ENCODE measurements at regions of chr12 and their contacts with region 1.

Region 1: DNA sequence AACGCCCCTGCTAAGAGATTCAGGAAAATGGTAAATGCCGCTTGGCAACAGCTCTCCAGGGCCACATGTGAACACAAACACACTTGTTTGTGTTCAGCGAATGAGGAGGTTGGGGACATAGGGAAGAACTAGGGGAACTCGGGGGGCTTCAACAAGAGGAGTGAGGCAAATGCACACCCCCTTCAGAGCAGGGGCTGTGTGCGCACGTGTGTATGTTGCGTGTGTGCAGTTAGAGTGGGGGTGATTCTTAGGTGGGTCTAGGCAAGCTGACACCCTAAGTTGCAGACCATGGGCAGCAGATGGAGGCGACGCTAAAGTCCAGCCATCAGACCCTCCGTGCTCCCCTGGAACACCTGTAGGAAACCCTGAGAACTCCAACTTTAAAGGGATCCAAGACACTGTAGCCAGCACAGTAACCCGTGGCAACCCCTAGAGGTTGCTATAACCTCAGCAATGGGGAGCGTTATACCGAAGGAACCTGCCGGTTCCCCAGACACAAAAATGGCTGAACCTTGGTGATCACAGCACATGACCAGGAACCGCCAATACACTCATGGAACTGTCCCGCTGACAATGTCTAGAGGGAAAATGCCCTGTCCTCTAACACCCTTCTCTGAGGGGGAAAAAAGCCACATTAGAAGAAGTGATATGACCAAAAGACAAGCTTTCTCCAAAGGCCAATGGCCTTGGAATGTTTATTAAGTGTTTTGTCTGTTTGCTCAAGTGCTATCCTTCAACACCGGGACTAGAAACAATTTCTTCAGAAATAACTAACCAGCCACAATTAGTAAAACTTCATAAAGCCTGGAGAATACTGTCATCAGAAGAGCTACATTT is 86.5 kb upstream of the CEP83 start:
- DNase-seq: peak; percentile 67
- H3K4me3 Mint-ChIP-seq: no peak overlapping the region
- H3K27ac Mint-ChIP-seq: no peak overlapping the region
- H3K4me1 Mint-ChIP-seq: peaks cover 5% of the 10 kb centered on the region
- H3K27me3 Mint-ChIP-seq: no peaks in the 10 kb centered on the region
- CTCF ChIP-seq: peak; percentile 84

Region 2: GRCh38 chr12:94725375-94726168 is 179.4 kb after region 1 on chr12:
- CTCF ChIA-PET with region 1: no interaction called
- POLR2A ChIA-PET with region 1: no interaction called
- intact Hi-C with region 1: loop called (anchors 1 kb)
- DNase-seq: peak; percentile 70
- H3K4me3 Mint-ChIP-seq: no peak overlapping the region
- H3K27ac Mint-ChIP-seq: no peak overlapping the region
- H3K4me1 Mint-ChIP-seq: no peaks in the 10 kb centered on the region
- H3K27me3 Mint-ChIP-seq: no peaks in the 10 kb centered on the region
- CTCF ChIP-seq: peak; percentile 49

Region 3: DNA sequence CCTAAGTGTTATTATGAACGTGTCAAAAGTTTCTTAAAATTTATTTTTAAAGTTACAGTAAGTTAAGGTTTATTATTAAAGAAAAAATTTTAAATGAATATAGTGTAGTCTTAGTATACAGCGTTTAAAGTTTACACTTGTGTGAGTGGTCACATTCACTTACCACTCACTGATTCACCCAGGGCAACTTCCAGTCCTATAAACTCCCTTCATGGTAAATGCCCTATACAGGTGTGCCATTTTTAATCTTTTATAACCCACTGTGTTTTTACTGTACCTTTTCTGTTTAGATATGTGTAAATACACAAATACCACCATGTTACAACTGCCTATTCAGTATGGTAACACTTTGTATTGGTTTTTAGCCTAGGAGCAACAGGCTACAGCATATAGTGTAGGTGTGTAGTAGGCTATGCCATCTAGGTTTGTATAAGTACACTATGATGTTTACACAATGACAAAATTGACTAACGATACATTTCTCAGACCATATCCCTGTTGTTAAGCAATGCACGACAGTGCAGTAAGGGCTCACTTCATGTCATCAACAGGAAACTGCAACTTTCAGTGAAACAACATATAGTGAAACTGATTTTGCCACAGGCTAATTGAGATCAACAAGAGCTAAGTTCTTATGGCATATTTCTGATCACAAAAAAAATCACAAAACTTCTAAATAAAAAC is 216.2 kb after region 1 on chr12:
- CTCF ChIA-PET with region 1: interaction called, 6 read pairs
- POLR2A ChIA-PET with region 1: interaction called, 3 read pairs
- intact Hi-C with region 1: loop called (anchors 1 kb)
- DNase-seq: peak; percentile 50
- H3K4me3 Mint-ChIP-seq: no peak overlapping the region
- H3K27ac Mint-ChIP-seq: peak overlapping the region; percentile 92
- H3K4me1 Mint-ChIP-seq: peaks cover 7% of the 10 kb centered on the region
- H3K27me3 Mint-ChIP-seq: no peaks in the 10 kb centered on the region
- CTCF ChIP-seq: no peak

Region 4: GRCh38 chr12:94980577-94980976 is 434.4 kb after region 1 on chr12:
- CTCF ChIA-PET with region 1: no interaction called
- POLR2A ChIA-PET with region 1: no interaction called
- intact Hi-C with region 1: loop called (anchors 2 kb)
- DNase-seq: no peak
- H3K4me3 Mint-ChIP-seq: no peak overlapping the region
- H3K27ac Mint-ChIP-seq: no peak overlapping the region
- H3K4me1 Mint-ChIP-seq: peaks cover 13% of the 10 kb centered on the region
- H3K27me3 Mint-ChIP-seq: no peaks in the 10 kb centered on the region
- CTCF ChIP-seq: peak; percentile 34

Region 5: DNA sequence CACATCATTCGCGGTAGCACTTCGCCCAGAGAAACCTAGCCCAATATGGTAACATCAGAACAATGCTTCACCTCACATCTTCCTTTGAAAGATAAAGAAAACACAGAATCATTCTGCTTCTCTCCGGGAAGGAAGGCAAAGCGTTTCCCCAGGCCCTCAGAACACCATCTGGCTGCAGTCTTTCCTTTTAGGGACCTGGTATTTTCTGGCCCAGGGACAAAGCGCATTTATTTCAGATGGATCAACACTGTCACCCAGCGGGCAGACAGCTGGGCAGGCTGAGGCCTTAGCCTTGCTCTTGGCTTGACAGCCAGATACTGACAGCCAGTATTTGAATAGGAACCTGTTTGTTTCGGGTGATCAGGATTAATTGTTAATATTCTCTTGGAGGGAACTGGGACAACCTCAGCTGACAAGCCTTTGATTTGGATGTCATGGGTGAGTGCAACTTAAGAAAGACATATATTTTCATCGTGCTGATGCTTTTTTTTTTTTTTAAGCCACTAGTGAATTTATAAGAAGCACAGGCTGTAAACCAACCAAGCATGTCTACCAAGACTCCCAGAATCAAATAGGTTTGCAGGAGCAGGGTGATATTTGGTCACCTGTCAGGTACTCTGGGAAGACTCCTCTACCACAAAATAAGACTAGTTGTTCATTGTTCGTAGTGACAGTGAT is 790.4 kb after region 1 on chr12:
- CTCF ChIA-PET with region 1: no interaction called
- POLR2A ChIA-PET with region 1: no interaction called
- intact Hi-C with region 1: loop called (anchors 5 kb)
- DNase-seq: peak; percentile 57
- H3K4me3 Mint-ChIP-seq: no peak overlapping the region
- H3K27ac Mint-ChIP-seq: no peak overlapping the region
- H3K4me1 Mint-ChIP-seq: peaks cover 6% of the 10 kb centered on the region
- H3K27me3 Mint-ChIP-seq: no peaks in the 10 kb centered on the region
- CTCF ChIP-seq: peak; percentile 71